GM10248 (cell line): ENCODE measurements at regions of chr3 and their contacts with region 1.

Region 1: DNA sequence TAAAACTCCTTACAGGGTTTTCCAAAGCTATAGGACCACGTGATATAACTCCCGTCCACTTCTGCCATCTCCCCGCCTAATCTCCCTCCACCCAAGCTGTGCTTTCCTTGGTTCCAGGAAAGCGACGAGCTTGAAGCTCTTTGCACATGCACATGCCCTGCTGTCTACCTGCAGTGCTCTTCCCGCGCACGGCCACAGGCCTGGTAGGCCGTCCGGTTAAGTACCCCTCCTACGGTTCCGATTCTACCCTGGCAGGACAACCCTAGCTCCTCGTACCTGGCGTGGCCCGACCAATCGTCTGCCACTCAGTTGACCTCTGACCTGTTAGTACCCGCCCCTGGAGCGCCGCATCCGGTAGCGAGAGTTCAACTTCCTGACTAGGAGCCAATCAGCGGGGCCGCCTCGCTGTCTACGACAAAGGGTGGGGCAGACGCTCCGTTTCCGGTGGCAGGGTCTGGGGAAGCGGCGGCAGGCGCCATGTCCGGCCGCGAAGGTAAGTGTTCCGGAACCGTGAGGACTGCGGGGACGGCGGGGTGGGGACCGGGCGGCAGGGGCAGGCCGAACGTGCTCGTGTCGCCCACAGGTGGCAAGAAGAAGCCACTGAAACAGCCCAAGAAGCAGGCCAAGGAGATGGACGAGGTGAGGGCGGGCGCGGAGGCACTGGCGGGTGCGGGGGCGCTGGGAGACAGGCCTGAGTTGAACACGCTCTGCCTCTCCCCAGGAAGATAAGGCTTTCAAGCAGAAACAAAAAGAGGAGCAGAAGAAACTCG is at the starts of genes CCDC51 and TMA7:
- DNase-seq: peak; percentile 99
- CTCF ChIP-seq: no peak

Region 2: GRCh38 chr3:48222616-48223513 is 217.1 kb before region 1 on chr3 and contains the start of gene CAMP:
- CTCF ChIA-PET with region 1: interaction called, 132 read pairs
- POLR2A ChIA-PET with region 1: no interaction called
- DNase-seq: peak; percentile 84
- CTCF ChIP-seq: no peak

Region 3: DNA sequence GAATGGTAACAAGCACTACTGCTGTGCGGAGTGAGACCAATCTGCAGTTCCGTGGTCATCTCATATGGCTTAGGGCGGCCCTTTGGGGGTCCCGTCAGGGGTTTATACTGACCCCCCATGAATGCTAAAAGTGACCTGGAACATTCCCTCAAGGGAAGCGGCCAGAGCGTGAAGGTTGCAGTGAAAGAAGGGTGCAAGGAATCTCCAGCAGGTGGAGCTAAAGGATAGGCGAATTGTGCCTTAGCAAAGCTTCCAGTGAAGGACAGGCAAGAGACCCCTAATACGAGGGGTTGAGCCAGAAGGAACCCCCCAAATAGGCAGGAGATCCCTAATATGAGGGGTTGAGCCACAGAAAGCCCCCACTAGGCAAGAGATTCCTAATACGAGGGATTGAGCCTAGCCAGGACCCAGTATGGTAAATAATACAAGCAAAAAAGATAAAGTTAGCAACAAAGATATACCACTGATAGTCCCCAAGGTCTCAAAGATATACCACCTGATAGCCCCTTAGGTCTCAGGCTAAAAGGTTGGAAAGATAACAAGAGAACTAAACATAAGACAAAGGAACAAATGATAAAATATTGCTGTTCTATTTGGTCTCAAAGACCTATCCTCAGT is 166.3 kb before region 1 on chr3:
- CTCF ChIA-PET with region 1: interaction called, 308 read pairs
- POLR2A ChIA-PET with region 1: interaction called, 4 read pairs
- DNase-seq: peak; percentile 77
- CTCF ChIP-seq: peak; percentile 81

Region 4: GRCh38 chr3:48394391-48394790 is 45.6 kb before region 1 on chr3:
- CTCF ChIA-PET with region 1: interaction called, 863 read pairs
- POLR2A ChIA-PET with region 1: interaction called, 3 read pairs
- DNase-seq: no peak
- CTCF ChIP-seq: no peak

Region 5: DNA sequence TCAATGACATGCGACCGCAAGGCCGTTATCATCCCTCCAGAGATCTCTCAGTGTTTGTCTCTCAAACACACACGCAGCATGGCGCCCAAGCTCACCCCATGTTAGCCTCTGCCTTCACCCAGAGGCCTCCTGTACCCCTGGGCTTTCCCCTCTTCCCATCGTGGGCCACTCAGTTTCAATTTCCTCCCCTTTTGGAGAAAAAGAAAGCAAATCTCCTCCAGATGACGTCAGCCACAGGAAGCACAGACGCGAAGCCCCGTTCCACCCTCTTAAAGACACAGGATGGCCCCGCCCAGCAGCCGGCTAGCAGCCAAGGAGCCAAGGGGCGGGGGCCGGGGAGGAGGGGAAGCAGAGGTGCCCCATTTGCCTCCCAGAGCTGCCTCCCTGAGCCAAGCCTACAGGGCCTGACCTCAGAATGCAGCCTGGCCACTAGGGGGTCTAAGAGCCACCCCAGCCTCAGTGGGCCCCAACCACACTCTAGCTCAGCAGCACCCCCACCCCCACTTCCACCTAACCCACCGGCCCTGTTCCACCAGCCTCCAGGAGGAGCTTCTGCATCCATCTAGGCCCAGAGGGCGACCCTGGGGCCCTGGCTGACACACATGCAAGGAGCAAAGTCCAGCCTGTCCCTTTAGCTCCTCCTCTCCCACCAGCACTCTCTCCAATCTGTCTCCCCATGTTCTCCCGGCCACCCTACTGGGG is 33.1 kb after region 1 on chr3:
- CTCF ChIA-PET with region 1: interaction called, 37 read pairs
- POLR2A ChIA-PET with region 1: no interaction called
- DNase-seq: peak; percentile 95
- CTCF ChIP-seq: peak; percentile 24

Region 6: GRCh38 chr3:48556793-48557626 is 117.0 kb after region 1 on chr3 and contains the start of gene PFKFB4:
- CTCF ChIA-PET with region 1: interaction called, 29 read pairs
- POLR2A ChIA-PET with region 1: no interaction called
- DNase-seq: peak; percentile 99
- CTCF ChIP-seq: no peak

Region 7: GRCh38 chr3:48926425-48927392 is 486.7 kb after region 1 on chr3:
- CTCF ChIA-PET with region 1: no interaction called
- POLR2A ChIA-PET with region 1: no interaction called
- DNase-seq: no peak
- CTCF ChIP-seq: no peak